Activated CD4-positive, alpha-beta memory T cell treated with anti-CD3 and anti-CD28 coated beads for 36 hours (primary cell): ENCODE measurements at regions of chr7 and their contacts with region 1.

Region 1: GRCh38 chr7:142587578-142588191 is 161.6 kb upstream of the PRSS1 start:
- DNase-seq: no peak
- H3K4me3 Mint-ChIP-seq: no peak overlapping the region
- H3K27ac Mint-ChIP-seq: peak overlapping the region; percentile 54
- H3K4me1 Mint-ChIP-seq: peaks cover 8% of the 10 kb centered on the region
- H3K27me3 Mint-ChIP-seq: no peaks in the 10 kb centered on the region

Region 2: DNA sequence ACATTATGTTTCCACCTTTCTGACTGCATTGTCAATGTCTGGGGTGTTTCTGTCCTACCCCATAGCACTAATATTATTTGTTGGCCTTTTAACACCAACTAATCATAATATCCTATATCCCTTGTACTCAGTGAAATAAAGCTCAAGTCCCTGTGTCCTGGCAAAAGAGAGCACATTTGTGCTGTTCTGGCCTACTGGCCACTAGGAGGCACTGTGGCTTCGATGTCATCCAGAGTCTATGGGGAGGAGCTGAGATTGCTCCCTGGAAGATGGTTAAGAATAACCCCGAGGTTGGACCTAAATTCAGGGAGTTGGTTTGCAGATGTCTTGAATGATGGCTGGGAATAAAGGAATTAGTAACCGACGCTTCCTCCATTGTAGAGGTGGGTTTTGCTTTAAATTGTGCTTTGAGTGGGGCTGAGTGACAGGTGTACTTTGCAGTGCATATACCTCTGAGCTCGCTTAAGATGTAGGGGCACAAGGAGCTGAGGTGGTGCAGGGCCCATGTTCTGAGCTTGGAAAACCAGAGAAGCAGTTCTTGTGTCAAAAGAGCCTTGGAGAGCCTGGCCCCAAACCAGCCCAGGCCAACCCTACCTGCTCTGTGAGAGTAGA is 29.6 kb before region 1 on chr7:
- CTCF ChIA-PET with region 1: interaction called, 22 read pairs
- POLR2A ChIA-PET with region 1: no interaction called
- intact Hi-C with region 1: loop called (anchors 1 kb)
- DNase-seq: peak; percentile 65
- H3K4me3 Mint-ChIP-seq: peak overlapping the region; percentile 28
- H3K27ac Mint-ChIP-seq: peak overlapping the region; percentile 35
- H3K4me1 Mint-ChIP-seq: peaks cover 5% of the 10 kb centered on the region
- H3K27me3 Mint-ChIP-seq: peaks cover 3% of the 10 kb centered on the region

Region 3: DNA sequence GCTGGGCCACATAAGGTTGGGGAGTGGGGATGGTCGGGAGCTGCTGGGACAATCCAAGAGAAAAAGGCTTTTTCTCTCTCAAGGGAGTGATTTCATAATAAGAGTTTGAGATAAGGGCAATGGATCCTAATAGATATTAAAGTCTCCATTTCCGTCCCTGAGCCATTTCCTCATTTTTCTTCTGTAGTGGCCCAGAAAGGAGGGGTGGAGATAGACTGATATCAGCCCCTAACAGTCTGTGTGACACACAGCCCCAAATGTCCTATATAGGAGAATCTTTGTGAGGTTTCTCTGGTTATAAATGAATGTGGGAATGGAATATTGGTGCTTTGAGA is 218.3 kb after region 1 on chr7:
- CTCF ChIA-PET with region 1: interaction called, 3 read pairs
- POLR2A ChIA-PET with region 1: no interaction called
- intact Hi-C with region 1: loop called (anchors 1 kb)
- DNase-seq: no peak
- H3K4me3 Mint-ChIP-seq: peak overlapping the region; percentile 14
- H3K27ac Mint-ChIP-seq: peak overlapping the region; percentile 100
- H3K4me1 Mint-ChIP-seq: peaks cover 97% of the 10 kb centered on the region
- H3K27me3 Mint-ChIP-seq: no peaks in the 10 kb centered on the region